GM10248 (cell line): ENCODE measurements at regions of chr5 and their contacts with region 1.

Region 1: DNA sequence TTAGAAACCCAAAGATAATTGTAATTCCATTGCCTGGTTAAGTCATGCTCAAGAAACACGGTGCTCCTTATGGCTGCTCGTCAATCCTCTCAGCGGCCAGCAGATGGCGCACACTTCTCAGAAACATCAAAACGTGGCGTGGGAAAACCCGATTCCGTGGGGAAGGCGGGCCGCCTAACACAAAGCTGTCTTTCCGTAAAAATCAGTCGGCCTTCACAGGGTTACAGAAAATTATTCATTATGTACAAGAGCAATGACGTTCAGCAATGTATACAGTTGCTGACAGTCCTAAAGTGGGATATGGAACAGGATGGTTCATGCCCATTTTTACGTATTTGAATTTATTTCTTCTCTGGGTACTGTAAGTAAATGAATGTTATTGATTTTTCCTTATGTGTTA is 83.5 kb downstream of the PDE4D start:
- DNase-seq: peak; percentile 64
- CTCF ChIP-seq: peak; percentile 89

Region 2: GRCh38 chr5:59458321-59458720 is 351.7 kb before region 1 on chr5:
- CTCF ChIA-PET with region 1: no interaction called
- POLR2A ChIA-PET with region 1: no interaction called
- DNase-seq: no peak
- CTCF ChIP-seq: no peak

Region 3: DNA sequence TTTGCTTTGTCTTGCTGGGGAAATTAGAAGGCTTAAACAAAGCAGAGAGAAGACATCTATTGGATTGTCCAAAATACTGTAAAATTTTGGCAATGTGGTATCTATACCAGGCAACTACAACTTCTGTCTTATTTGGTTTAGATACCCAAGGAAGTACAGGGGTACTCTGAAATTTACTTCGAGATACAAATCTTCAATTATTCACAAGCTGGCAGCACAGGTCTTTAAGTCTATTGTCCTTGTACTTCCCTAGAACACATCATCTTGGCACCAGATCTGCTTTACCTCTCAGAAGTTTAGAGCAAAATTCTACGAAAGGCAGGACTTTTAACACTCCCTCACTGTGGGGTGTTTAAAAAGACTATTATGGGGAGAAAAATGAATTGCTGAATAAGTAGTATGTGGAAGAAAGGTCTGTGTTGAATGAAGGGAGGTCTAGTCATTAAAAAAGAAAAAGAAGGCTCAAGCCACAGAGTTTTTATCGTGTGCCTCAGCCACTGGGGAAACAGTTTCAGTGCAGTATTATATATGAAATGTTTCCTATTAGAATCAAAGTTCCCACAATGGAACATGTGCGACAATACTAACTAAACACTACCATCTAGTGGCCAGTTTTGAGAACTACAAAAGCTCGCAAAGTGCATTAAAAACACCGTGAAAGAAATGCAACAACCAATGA is 10.2 kb before region 1 on chr5:
- CTCF ChIA-PET with region 1: interaction called, 40 read pairs
- POLR2A ChIA-PET with region 1: no interaction called
- DNase-seq: peak; percentile 21
- CTCF ChIP-seq: peak; percentile 60

Region 4: GRCh38 chr5:59873113-59873512 is 63.1 kb after region 1 on chr5:
- CTCF ChIA-PET with region 1: no interaction called
- POLR2A ChIA-PET with region 1: no interaction called
- DNase-seq: no peak
- CTCF ChIP-seq: no peak

Region 5: GRCh38 chr5:60287174-60287771 is 477.2 kb after region 1 on chr5:
- CTCF ChIA-PET with region 1: interaction called, 12 read pairs
- POLR2A ChIA-PET with region 1: no interaction called
- DNase-seq: peak; percentile 19
- CTCF ChIP-seq: peak; percentile 36

Region 6: DNA sequence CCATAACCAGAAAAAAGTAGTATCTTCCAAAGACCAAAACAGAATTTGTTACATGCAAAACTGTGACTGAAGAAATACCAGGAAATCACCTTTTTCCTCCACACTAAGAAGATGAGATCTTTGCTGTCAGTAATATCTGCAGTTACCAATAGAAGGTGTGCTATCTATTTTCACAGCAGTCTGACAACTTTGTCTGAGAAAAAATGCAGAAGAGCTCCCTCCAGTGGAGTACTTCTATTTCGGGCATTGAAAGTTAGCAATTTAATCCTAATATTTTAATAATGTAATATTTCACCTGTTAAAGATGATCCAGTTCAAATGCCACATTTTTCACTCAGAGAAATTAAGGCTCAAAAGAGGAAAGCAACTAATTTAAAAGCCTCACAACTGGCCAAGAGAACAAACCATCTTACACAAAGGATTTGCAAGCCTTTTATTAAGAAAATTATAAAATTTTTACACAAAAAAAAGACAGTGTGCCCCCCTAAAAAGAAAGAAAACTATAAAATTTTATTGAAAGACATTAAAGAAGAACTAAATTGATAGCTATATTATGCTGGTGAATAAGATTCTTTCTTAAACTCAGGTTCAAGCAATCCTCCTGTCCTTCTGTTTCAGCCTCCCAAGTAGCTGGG is 839.4 kb after region 1 on chr5:
- CTCF ChIA-PET with region 1: interaction called, 41 read pairs
- POLR2A ChIA-PET with region 1: no interaction called
- DNase-seq: peak; percentile 41
- CTCF ChIP-seq: peak; percentile 60

Region 7: GRCh38 chr5:60677844-60678664 is 868.0 kb after region 1 on chr5:
- CTCF ChIA-PET with region 1: interaction called, 14 read pairs
- POLR2A ChIA-PET with region 1: no interaction called
- DNase-seq: peak; percentile 35
- CTCF ChIP-seq: peak; percentile 50